ENCODE measurements at regions of chr7 and their contacts with region 1.

Region 1: GRCh38 chr7:73433924-73434700 is 534 bp downstream of the FZD9 start:
- DNase-seq: no peak
- H3K4me3 Mint-ChIP-seq: peak overlapping the region; percentile 50
- H3K27ac Mint-ChIP-seq: no peak overlapping the region
- H3K4me1 Mint-ChIP-seq: no peaks in the 10 kb centered on the region
- H3K27me3 Mint-ChIP-seq: no peaks in the 10 kb centered on the region
- CTCF ChIP-seq: no peak

Region 2: DNA sequence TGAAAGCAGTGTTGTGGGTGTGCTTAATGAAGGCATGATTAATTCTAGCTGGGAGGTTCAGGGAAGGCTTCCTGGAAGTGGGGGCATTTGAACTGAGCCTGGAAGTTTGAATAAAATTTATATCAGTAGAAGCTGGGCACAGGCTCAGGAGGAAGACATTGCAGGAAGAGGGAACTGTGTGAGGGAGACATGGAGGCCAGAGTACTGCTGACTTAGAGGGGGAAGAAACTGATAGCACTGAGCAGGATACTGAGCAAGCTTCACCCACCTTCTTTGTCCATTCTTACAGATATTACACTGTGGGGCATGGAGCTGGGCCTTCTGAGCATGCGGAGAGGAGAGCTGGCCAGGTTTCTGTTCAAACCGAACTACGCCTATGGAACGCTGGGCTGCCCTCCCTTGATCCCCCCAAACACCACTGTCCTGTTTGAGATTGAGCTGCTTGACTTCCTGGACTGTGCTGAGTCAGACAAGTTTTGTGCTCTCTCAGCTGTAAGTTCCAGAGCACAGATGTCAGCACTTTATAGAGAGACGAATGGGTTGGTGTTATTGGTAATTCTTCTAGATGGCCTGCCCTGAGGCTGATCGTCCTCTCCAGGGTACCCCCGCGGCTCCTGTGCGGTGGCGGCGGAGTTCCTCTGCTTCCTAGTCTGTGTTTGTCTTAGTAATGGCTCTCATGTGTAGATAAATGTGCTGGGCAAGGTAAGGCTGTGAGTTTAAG is 104.1 kb before region 1 on chr7:
- CTCF ChIA-PET with region 1: no interaction called
- intact Hi-C with region 1: no loop called
- DNase-seq: no peak
- H3K4me3 Mint-ChIP-seq: no peak overlapping the region
- H3K27ac Mint-ChIP-seq: no peak overlapping the region
- H3K4me1 Mint-ChIP-seq: no peaks in the 10 kb centered on the region
- H3K27me3 Mint-ChIP-seq: peaks cover 45% of the 10 kb centered on the region
- CTCF ChIP-seq: no peak

Region 3: GRCh38 chr7:73342645-73343044 is 91.5 kb before region 1 on chr7:
- CTCF ChIA-PET with region 1: no interaction called
- intact Hi-C with region 1: loop called (anchors 10 kb)
- DNase-seq: peak; percentile 5
- H3K4me3 Mint-ChIP-seq: no peak overlapping the region
- H3K27ac Mint-ChIP-seq: no peak overlapping the region
- H3K4me1 Mint-ChIP-seq: peaks cover 7% of the 10 kb centered on the region
- H3K27me3 Mint-ChIP-seq: peaks cover 3% of the 10 kb centered on the region
- CTCF ChIP-seq: no peak

Region 4: DNA sequence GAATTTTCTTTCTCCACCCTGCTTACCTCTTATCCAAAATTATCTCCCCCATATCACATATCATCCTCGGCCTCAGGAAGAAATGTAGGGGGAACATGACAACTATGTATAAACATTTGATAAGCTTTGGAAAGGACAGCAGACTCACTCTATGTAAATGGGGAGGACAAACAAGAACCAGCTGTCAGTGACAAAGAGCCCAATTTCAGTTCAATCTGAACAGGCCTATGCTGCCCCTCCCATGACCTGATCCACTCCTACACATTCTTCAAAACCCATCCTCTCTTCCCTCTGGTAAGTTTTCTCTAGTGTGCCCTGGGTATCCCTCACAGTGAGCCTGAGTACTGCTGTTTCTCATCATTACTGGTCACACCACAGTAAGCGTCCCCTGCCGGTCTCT is 20.3 kb after region 1 on chr7:
- CTCF ChIA-PET with region 1: no interaction called
- intact Hi-C with region 1: no loop called
- DNase-seq: no peak
- H3K4me3 Mint-ChIP-seq: no peak overlapping the region
- H3K27ac Mint-ChIP-seq: no peak overlapping the region
- H3K4me1 Mint-ChIP-seq: no peaks in the 10 kb centered on the region
- H3K27me3 Mint-ChIP-seq: no peaks in the 10 kb centered on the region
- CTCF ChIP-seq: no peak